ENCODE measurements at regions of chr12 and their contacts with region 1.

Region 1: GRCh38 chr12:47949441-47950308 is 13.7 kb upstream of the TMEM106C start:
- DNase-seq: peak; percentile 46 to 60 (median 59)
- H3K4me3 ChIP-seq: no peak overlapping the region
- H3K27ac ChIP-seq: no peak overlapping the region
- H3K4me1 ChIP-seq: peaks cover 2 to 16% (median 13%) of the 10 kb centered on the region in 4 experiments
- H3K27me3 ChIP-seq: no peaks in the 10 kb centered on the region

Region 2: GRCh38 chr12:47449797-47450196 is 499.9 kb before region 1 on chr12:
- CTCF ChIA-PET with region 1: no interaction called
- POLR2A ChIA-PET with region 1: no interaction called
- DNase-seq: no peak
- H3K4me3 ChIP-seq: no peak overlapping the region
- H3K27ac ChIP-seq: no peak overlapping the region
- H3K4me1 ChIP-seq: no peaks in the 10 kb centered on the region
- H3K27me3 ChIP-seq: peaks cover 0 to 2% (median 0%) of the 10 kb centered on the region in 5 experiments

Region 3: DNA sequence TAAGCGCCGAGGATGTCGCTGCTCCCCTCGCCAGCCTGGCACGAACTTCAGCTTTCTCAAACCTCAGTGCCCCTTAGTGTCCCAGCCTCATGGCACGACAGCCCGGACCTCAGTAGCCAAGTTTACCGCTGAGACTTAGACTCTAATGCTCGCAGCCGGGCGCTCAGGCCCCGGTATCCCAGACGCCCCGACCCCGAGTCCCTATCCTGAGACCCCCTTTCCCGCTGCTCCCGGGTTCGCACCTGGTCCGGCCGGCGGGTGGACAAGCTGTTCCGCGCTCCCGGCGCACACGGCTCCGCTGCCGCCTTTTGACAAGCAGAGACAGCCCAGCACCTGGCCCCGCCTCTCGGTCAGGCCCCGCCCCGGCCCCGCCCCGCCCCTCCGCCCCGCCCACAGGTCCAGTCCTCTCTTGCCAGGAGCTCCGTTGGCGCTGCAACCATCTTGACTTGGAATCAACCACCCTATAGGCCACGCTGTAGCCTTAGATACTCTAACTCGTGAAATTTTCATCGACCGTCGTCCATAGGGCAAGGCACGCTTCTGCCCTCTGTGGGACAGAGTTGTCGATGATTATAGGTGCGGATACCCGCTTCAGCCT is 44.9 kb before region 1 on chr12 and contains the start of gene VDR:
- CTCF ChIA-PET with region 1: interaction called, 11 read pairs
- POLR2A ChIA-PET with region 1: no interaction called
- DNase-seq: peak; percentile 82 to 87 (median 84)
- H3K4me3 ChIP-seq: peak within 1 kb of the TSS; percentile 52 to 82 (median 71)
- H3K27ac ChIP-seq: no peak within 1 kb of the TSS
- H3K4me1 ChIP-seq: peaks cover 14 to 57% (median 46%) of the 10 kb centered on the region in 4 experiments
- H3K27me3 ChIP-seq: peaks cover 6 to 28% (median 21%) of the 10 kb centered on the region in 5 experiments

Region 4: DNA sequence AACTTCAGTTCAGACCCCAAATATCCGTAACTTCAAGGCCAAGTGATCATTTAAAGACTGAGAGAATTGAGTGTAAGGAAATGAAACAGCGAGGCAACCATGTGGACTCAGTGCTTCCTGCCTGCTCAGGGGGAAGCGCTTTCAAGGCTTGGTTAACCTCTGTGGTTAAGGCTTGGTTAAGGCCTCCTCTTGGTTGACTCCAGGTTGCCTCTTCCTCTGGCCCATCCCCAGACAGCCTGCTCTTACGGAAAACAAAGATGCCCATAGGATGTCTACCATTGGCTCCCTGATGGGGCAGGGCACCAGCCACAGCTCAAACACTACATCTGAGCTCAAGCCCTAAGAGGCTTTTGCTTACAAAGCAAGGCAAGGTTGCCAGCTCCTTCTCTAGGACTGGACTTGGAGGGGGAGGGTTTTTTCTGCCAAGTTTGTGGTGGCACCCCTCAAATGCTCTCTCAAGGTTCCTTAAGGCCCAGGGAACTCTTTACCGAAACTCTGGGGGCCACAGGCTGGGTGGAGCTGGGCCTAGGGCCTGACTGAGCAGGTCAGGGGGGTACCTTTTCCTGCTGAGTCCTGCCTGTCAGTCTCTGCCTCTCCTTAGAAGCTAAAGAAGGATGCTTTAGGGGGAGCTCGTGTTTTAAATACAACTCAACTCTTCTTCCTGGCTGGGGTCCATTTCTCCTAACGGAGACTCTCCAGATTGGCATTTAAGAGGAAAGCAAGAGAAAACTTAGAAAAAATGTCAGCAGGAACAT is 40.9 kb after region 1 on chr12:
- CTCF ChIA-PET with region 1: no interaction called
- POLR2A ChIA-PET with region 1: no interaction called
- DNase-seq: peak; percentile 69 to 90 (median 88)
- H3K4me3 ChIP-seq: peak overlapping the region in 2 of 7 experiments; percentile 21 to 29
- H3K27ac ChIP-seq: no peak overlapping the region
- H3K4me1 ChIP-seq: peaks cover 0 to 18% (median 15%) of the 10 kb centered on the region in 4 experiments
- H3K27me3 ChIP-seq: peaks cover 0 to 10% (median 3%) of the 10 kb centered on the region in 5 experiments

Measured in common myeloid progenitor, CD34-positive (primary cell).